A549 (cell line): ENCODE measurements at regions of chr9 and their contacts with region 1.

Region 1: GRCh38 chr9:122940603-122941559 is at the start of gene RABGAP1:
- DNase-seq: peak; percentile 98 to 99
- ATAC-seq: peak; percentile 99
- H3K4me3 ChIP-seq: peak within 1 kb of the TSS; percentile 56
- H3K27ac ChIP-seq: peak within 1 kb of the TSS; percentile 87 to 92
- H3K4me1 ChIP-seq: peaks cover 20% of the 10 kb centered on the region; the same call in 2 of the 3 replicates
- CTCF ChIP-seq: no peak
- EP300 ChIP-seq: 0 out of 5 replicates have a peak, but pooled peaks of 1 of the 2 experiments have one; percentile 15
- POLR2A ChIP-seq: peak; percentile 61
- RAD21 ChIP-seq: no peak
- polyA plus RNA-seq, gene RABGAP1: 39.9 and 52.9 TPM in 2 replicates

Region 2: DNA sequence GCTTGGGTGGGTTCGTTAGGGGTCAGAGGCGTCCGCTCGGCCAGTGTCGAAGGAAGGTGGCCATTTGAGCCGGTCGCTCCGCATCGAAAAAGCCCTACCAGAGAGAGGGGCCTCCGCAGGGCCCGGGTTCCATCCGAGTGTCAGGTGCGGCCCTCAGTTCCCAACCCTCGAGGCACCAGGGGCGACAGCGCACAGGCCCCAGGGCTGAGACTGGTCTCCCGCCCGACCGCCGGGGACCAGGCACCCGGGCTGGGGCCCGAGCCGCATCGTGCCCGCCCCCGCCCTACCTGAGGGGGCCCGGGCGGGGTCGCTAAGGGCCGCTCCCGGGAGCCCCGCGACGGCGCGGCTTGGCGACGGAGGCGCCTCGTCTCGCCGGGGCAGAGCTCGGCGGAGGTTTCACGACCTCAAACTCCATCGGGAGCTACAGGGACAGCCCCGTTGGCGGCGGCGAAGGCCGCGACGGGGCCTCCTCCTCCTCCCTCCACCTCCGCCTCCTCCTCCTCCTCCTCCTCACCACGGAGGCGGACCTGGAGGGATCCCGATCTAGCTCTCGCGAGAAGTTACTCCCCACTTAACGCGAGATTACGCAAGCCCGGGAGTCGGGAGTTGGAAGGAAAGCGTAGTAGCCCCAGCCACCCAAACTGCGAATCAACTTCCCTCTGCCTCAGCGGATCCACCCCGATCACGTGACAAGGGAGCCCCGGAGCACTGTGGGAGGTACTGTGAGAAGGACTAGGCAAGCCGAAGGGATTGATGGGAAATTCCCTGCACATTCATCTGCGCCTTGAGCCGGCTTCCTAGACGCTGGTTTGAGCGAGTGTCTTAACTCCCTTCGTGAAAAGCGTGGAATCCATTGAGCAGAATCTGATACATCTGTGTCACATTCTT is 35.8 kb before region 1 on chr9 and contains the start of gene RC3H2:
- CTCF ChIA-PET with region 1: no interaction called
- POLR2A ChIA-PET with region 1: interaction called, 28 read pairs
- DNase-seq: peak; percentile 94 to 100
- ATAC-seq: peak; percentile 92 to 97
- H3K4me3 ChIP-seq: peak within 1 kb of the TSS; percentile 78
- H3K27ac ChIP-seq: peak within 1 kb of the TSS; percentile 94 to 98
- H3K4me1 ChIP-seq: peaks cover 32% of the 10 kb centered on the region
- CTCF ChIP-seq: no peak
- EP300 ChIP-seq: no peak
- POLR2A ChIP-seq: peak; percentile 87
- RAD21 ChIP-seq: no peak
- polyA plus RNA-seq, gene RC3H2: 42.5 and 43.6 TPM in 2 replicates

Region 3: GRCh38 chr9:122912964-122913673 is 27.8 kb before region 1 on chr9 and contains the start of gene ZBTB6:
- CTCF ChIA-PET with region 1: no interaction called
- POLR2A ChIA-PET with region 1: interaction called, 38 read pairs
- DNase-seq: peak; percentile 87 to 88
- ATAC-seq: peak; percentile 100
- H3K4me3 ChIP-seq: peak within 1 kb of the TSS; percentile 62
- H3K27ac ChIP-seq: peak within 1 kb of the TSS; percentile 80 to 95
- H3K4me1 ChIP-seq: peaks cover 8% of the 10 kb centered on the region
- CTCF ChIP-seq: no peak
- EP300 ChIP-seq: no peak
- POLR2A ChIP-seq: peak; percentile 8; the same call in 1 of the 2 replicates
- RAD21 ChIP-seq: no peak
- polyA plus RNA-seq, gene ZBTB6: 10.0 and 10.3 TPM in 2 replicates

Region 4: GRCh38 chr9:123027517-123027916 is 86.6 kb after region 1 on chr9:
- CTCF ChIA-PET with region 1: no interaction called
- POLR2A ChIA-PET with region 1: no interaction called
- DNase-seq: no peak
- ATAC-seq: no peak
- H3K4me3 ChIP-seq: no peak overlapping the region
- H3K27ac ChIP-seq: no peak overlapping the region
- H3K4me1 ChIP-seq: no peaks in the 10 kb centered on the region
- CTCF ChIP-seq: no peak
- EP300 ChIP-seq: no peak
- POLR2A ChIP-seq: no peak
- RAD21 ChIP-seq: no peak